Activated T-helper 2 cell treated with anti-CD3 and anti-CD28 coated beads, Interferon-gamma antibody, Interleukin-2, Interleukin-4, amounts not matched to agents 10 μg/mL and 5 μg/mL and 100 μg/mL, durations not matched to agents 14 hours and 24 hours and 36 hours (primary cell): ENCODE measurements at regions of chr13 and their contacts with region 1.

Region 1: GRCh38 chr13:46382224-46382623 is 4.8 kb downstream of the RUBCNL start:
- DNase-seq: no peak
- H3K4me3 Mint-ChIP-seq: no peak overlapping the region
- H3K27ac Mint-ChIP-seq: no peak overlapping the region
- H3K4me1 Mint-ChIP-seq: peaks cover 4% of the 10 kb centered on the region
- H3K27me3 Mint-ChIP-seq: peaks cover 40% of the 10 kb centered on the region

Region 2: GRCh38 chr13:46341112-46341711 is 41.0 kb before region 1 on chr13:
- intact Hi-C with region 1: no loop called
- DNase-seq: no peak
- H3K4me3 Mint-ChIP-seq: peak overlapping the region; percentile 5
- H3K27ac Mint-ChIP-seq: peak overlapping the region; percentile 81
- H3K4me1 Mint-ChIP-seq: peaks cover 45% of the 10 kb centered on the region
- H3K27me3 Mint-ChIP-seq: no peaks in the 10 kb centered on the region

Region 3: GRCh38 chr13:46359750-46360149 is 22.5 kb before region 1 on chr13:
- intact Hi-C with region 1: loop called (anchors 1 kb)
- DNase-seq: no peak
- H3K4me3 Mint-ChIP-seq: no peak overlapping the region
- H3K27ac Mint-ChIP-seq: no peak overlapping the region
- H3K4me1 Mint-ChIP-seq: peaks cover 8% of the 10 kb centered on the region
- H3K27me3 Mint-ChIP-seq: no peaks in the 10 kb centered on the region